ENCODE measurements at regions of chr18 and their contacts with region 1.

Region 1: GRCh38 chr18:57561728-57562423 is 24.6 kb downstream of the FECH start:
- DNase-seq: peak; percentile 74
- H3K4me3 ChIP-seq: no peak overlapping the region
- H3K27ac ChIP-seq: no peak overlapping the region
- H3K4me1 ChIP-seq: peaks cover 6% of the 10 kb centered on the region
- H3K27me3 ChIP-seq: no peaks in the 10 kb centered on the region
- CTCF ChIP-seq: peak; percentile 89

Region 2: GRCh38 chr18:56748698-56749268 is 813.1 kb before region 1 on chr18:
- CTCF ChIA-PET with region 1: interaction called, 3 read pairs
- POLR2A ChIA-PET with region 1: no interaction called
- intact Hi-C with region 1: loop called (anchors 2 kb)
- DNase-seq: peak; percentile 62
- H3K4me3 ChIP-seq: no peak overlapping the region
- H3K27ac ChIP-seq: no peak overlapping the region
- H3K4me1 ChIP-seq: no peaks in the 10 kb centered on the region
- H3K27me3 ChIP-seq: no peaks in the 10 kb centered on the region
- CTCF ChIP-seq: peak; percentile 69

Region 3: GRCh38 chr18:57737400-57738060 is 175.7 kb after region 1 on chr18:
- CTCF ChIA-PET with region 1: no interaction called
- POLR2A ChIA-PET with region 1: no interaction called
- intact Hi-C with region 1: no loop called
- DNase-seq: peak; percentile 87
- H3K4me3 ChIP-seq: no peak overlapping the region
- H3K27ac ChIP-seq: peak overlapping the region; percentile 63
- H3K4me1 ChIP-seq: peaks cover 21% of the 10 kb centered on the region
- H3K27me3 ChIP-seq: no peaks in the 10 kb centered on the region
- CTCF ChIP-seq: no peak

Region 4: DNA sequence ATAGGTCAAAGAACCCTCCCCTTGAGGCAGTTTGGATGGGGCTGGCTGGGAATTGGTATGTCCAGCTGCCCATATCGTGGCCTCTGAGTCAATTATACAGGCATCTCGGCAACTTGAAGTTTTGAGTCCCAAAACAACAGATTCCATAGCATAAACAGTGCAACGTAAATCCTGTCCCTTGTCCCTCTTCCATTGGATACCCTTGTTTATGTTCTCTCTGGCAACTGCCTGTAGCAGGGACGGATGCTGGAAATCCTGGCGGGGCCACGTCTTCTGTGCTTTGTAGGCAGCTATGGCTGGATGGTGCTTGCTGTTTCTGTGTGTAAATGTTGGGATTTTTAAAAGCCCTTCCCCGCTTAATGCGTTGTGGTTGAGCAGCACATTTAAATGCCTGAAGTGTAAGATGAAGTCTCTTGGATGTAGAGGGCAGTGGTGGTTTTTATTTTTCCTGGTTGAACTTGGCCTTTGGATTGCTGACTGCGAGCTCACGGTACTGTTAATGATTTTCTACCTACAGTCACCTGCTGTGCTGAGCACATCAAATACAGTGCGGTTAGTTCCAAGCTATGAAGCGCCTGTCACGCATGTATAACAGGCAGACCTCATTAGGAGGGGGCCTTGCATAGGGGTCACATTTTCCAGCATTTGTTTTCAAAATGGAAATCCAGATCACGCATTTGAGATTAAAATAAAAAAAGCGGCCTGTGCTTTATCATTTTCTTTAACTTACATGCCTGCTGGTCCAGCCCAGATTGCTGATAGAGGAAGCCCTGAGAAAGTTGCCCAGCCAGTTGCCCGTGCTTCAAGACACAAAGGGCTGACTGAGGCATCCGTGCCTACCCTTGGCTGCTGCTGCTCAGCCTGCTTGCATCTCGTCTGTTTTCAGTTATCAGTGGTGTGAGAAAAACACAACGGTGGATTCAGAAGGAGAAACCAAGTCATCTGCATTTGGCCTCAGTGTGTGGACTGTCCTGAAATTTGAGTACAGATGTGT is 566.8 kb after region 1 on chr18:
- CTCF ChIA-PET with region 1: no interaction called
- POLR2A ChIA-PET with region 1: no interaction called
- intact Hi-C with region 1: loop called (anchors 5 kb)
- DNase-seq: no peak
- H3K4me3 ChIP-seq: no peak overlapping the region
- H3K27ac ChIP-seq: no peak overlapping the region
- H3K4me1 ChIP-seq: no peaks in the 10 kb centered on the region
- H3K27me3 ChIP-seq: peaks cover 25% of the 10 kb centered on the region
- CTCF ChIP-seq: no peak